ENCODE measurements at regions of chr1 and their contacts with region 1.

Region 1: GRCh38 chr1:25037174-25038074 is 107.3 kb upstream of the RUNX3 start:
- DNase-seq: peak; percentile 54 to 60
- ATAC-seq: peak; percentile 38 to 78; a peak in 3 of 6 replicates
- H3K4me3 ChIP-seq: no peak overlapping the region
- H3K27ac ChIP-seq: 0 out of 6 replicates have a peak overlapping the region, but pooled peaks of 1 of the 2 experiments have one; percentile 29
- H3K4me1 ChIP-seq: no peaks in the 10 kb centered on the region
- CTCF ChIP-seq: peak; percentile 48
- EP300 ChIP-seq: no peak
- POLR2A ChIP-seq: no peak
- RAD21 ChIP-seq: peak; percentile 22 to 44; a peak in 4 of 5 replicates

Region 2: GRCh38 chr1:24930204-24931145 is 106.9 kb before region 1 on chr1 and contains the start of gene RUNX3:
- CTCF ChIA-PET with region 1: interaction called, 79 read pairs
- POLR2A ChIA-PET with region 1: no interaction called
- DNase-seq: peak; percentile 71 to 85
- ATAC-seq: peak; percentile 82 to 88
- H3K4me3 ChIP-seq: peak within 1 kb of the TSS; percentile 52
- H3K27ac ChIP-seq: peak within 1 kb of the TSS; percentile 53 to 88
- H3K4me1 ChIP-seq: peaks cover 3% of the 10 kb centered on the region; the same call in 1 of the 3 replicates
- CTCF ChIP-seq: no peak
- EP300 ChIP-seq: no peak
- POLR2A ChIP-seq: no peak
- RAD21 ChIP-seq: no peak
- polyA plus RNA-seq, gene RUNX3: 1.4 and 2.6 TPM in 2 replicates

Region 3: DNA sequence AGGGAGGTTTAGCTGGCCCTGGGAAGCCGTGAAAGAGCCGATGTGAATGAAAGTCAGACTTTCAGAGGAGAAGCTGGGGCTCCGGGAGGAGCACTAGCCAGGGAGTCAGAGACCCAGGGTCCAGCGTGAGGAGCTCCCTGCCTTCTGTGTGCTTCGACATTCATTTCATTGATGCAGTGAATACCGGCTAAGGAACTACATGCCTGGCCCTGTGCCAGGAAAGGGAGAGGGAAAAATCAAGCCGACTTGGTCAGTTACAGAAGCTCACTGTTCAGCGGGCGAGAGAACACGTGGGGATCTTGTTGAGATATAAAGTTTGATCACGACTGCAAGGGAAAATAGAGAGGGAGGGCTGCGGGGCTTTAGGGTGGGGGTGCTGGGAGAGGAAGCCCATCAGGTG is 30.7 kb before region 1 on chr1:
- CTCF ChIA-PET with region 1: interaction called, 10 read pairs
- POLR2A ChIA-PET with region 1: no interaction called
- DNase-seq: no peak
- ATAC-seq: no peak
- H3K4me3 ChIP-seq: no peak overlapping the region
- H3K27ac ChIP-seq: 0 out of 6 replicates have a peak overlapping the region, but pooled peaks of 1 of the 2 experiments have one; percentile 13
- H3K4me1 ChIP-seq: no peaks in the 10 kb centered on the region
- CTCF ChIP-seq: no peak
- EP300 ChIP-seq: no peak
- POLR2A ChIP-seq: no peak
- RAD21 ChIP-seq: no peak

Region 4: DNA sequence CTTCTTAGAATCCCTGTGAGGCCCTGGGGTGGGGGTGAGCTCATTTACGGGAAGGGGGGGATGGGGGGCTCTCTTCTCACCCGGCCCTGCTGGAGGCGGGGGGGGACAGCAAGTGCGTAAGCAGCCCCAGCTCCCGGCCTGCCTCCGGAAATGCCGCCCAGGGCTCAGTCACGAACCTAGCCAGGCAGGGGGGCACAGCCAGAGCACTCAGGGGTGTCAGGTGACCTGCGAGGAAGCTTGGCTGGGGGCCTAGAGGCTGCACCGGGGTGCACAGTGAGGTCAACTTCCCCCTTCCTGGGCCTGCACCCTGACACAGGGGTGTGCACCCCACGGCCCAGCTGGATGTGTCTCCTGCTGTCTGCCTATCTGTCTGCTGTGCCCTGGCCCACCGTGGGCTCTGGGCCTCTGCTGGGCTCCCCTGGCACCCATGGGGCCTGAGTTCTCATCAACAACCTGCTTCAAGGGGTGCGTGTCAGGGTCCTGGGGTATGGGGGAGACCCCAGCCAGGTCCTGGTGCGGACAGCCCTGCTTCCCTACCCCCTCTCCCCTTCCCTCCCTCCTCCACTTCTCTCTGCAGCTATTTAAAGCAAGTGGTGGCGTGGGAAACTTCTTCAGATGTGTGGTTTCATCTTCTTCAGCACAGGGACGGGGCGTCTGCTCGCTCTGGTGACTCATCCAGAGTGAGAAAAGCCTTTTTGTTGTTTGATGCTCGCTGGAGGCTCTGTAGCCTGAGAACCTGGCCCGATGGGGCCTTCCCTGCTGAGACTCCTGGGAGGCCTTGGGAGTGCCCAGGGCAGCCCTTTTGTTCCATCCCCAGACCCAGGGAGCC is 14.8 kb before region 1 on chr1:
- CTCF ChIA-PET with region 1: interaction called, 19 read pairs
- POLR2A ChIA-PET with region 1: interaction called, 6 read pairs
- DNase-seq: peak; percentile 34 to 76
- ATAC-seq: peak; percentile 76 to 81
- H3K4me3 ChIP-seq: no peak overlapping the region
- H3K27ac ChIP-seq: peak overlapping the region; percentile 61 to 90
- H3K4me1 ChIP-seq: peaks cover 16% of the 10 kb centered on the region; the same call in 2 of the 3 replicates
- CTCF ChIP-seq: no peak
- EP300 ChIP-seq: peak in 1 of 2 experiments; percentile 82; a peak in 2 of 5 replicates
- POLR2A ChIP-seq: no peak
- RAD21 ChIP-seq: no peak

Region 5: DNA sequence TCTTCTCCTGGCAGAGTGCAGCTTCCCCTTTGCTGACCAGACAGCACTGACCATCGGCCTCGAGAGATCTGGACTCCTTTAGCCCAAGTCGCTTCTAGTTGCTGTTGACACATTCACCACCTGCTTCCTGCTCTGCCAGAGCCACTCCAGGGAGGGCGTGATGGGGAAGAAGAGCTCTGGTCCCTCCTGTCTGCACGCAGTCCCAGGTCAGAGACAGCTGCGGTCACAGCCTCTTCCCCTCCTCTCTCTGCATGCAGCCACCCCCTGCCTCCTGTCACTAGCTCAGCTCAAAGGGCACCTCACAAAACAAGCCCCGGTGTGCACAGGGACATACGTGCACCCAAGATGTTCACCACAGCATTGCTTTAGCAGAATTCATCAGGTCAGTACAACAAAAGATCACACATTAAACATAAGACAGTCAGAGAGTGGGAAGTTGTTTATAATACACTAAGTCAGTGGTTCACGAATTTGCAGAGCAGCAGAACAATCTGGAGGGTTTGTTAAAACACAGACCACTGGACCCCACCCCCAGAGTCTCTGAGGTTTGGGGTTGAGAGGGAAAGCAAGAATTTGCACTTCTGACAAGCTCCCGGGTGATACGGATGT is 62.0 kb after region 1 on chr1:
- CTCF ChIA-PET with region 1: interaction called, 19 read pairs
- POLR2A ChIA-PET with region 1: no interaction called
- DNase-seq: no peak
- ATAC-seq: peak in 1 of 2 experiments; percentile 17; a peak in 2 of 6 replicates
- H3K4me3 ChIP-seq: no peak overlapping the region
- H3K27ac ChIP-seq: no peak overlapping the region
- H3K4me1 ChIP-seq: no peaks in the 10 kb centered on the region
- CTCF ChIP-seq: no peak
- EP300 ChIP-seq: no peak
- POLR2A ChIP-seq: no peak
- RAD21 ChIP-seq: no peak

Region 6: GRCh38 chr1:25223471-25223870 is 186.0 kb after region 1 on chr1:
- CTCF ChIA-PET with region 1: no interaction called
- POLR2A ChIA-PET with region 1: no interaction called
- DNase-seq: no peak
- ATAC-seq: no peak
- H3K4me3 ChIP-seq: no peak overlapping the region
- H3K27ac ChIP-seq: no peak overlapping the region
- H3K4me1 ChIP-seq: no peaks in the 10 kb centered on the region
- CTCF ChIP-seq: no peak
- EP300 ChIP-seq: no peak
- POLR2A ChIP-seq: no peak
- RAD21 ChIP-seq: no peak